AG04449 (cell line): ENCODE measurements at regions of chr1 and their contacts with region 1.

Region 1: DNA sequence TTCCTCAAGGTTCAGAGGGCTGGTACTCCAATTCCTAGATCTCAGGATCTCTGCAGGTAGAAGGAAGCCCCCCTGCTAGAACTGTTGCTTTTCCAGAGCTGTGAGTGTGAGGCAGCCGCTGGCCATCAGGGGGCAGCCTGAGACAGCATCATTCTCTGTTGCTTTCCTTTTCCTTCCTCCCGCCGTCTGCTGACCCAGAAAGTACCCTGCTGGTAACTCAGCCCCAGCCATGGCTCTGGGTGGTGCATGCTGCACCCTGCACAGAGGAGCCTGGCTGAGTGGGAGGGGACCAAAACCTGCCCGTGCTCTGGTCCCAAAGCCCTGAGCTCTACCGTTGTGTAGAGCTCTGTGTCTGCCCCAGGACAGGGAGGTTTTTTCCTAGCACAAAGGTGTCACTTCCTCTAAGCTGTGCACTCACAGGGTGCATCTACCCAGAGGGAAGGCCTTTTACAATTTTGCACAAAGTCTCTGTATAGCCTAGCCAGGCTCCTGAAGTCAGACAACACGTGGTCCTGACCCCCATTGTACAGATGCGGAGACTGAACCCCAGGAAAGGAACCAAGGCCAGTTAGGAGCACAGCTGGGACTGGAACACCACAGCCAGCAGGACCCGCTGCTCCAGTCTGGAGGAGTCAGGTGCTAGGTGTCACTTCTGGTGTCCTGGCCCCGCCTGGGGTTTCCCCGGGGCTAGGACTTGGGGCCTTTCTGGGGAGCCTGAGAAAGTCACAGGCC is 5.6 kb upstream of the FAM131C start:
- DNase-seq: no peak
- H3K4me3 ChIP-seq: no peak overlapping the region
- CTCF ChIP-seq: peak; percentile 96

Region 2: GRCh38 chr1:15902882-15903281 is 176.2 kb before region 1 on chr1:
- CTCF ChIA-PET with region 1: no interaction called
- POLR2A ChIA-PET with region 1: no interaction called
- DNase-seq: no peak
- H3K4me3 ChIP-seq: no peak overlapping the region
- CTCF ChIP-seq: no peak

Region 3: GRCh38 chr1:16091296-16091695 is 12.2 kb after region 1 on chr1:
- CTCF ChIA-PET with region 1: interaction called, 126 read pairs
- POLR2A ChIA-PET with region 1: interaction called, 4 read pairs
- DNase-seq: no peak
- H3K4me3 ChIP-seq: no peak overlapping the region
- CTCF ChIP-seq: no peak

Region 4: GRCh38 chr1:16117369-16117768 is 38.3 kb after region 1 on chr1:
- CTCF ChIA-PET with region 1: interaction called, 80 read pairs
- POLR2A ChIA-PET with region 1: no interaction called
- DNase-seq: no peak
- H3K4me3 ChIP-seq: no peak overlapping the region
- CTCF ChIP-seq: no peak

Region 5: DNA sequence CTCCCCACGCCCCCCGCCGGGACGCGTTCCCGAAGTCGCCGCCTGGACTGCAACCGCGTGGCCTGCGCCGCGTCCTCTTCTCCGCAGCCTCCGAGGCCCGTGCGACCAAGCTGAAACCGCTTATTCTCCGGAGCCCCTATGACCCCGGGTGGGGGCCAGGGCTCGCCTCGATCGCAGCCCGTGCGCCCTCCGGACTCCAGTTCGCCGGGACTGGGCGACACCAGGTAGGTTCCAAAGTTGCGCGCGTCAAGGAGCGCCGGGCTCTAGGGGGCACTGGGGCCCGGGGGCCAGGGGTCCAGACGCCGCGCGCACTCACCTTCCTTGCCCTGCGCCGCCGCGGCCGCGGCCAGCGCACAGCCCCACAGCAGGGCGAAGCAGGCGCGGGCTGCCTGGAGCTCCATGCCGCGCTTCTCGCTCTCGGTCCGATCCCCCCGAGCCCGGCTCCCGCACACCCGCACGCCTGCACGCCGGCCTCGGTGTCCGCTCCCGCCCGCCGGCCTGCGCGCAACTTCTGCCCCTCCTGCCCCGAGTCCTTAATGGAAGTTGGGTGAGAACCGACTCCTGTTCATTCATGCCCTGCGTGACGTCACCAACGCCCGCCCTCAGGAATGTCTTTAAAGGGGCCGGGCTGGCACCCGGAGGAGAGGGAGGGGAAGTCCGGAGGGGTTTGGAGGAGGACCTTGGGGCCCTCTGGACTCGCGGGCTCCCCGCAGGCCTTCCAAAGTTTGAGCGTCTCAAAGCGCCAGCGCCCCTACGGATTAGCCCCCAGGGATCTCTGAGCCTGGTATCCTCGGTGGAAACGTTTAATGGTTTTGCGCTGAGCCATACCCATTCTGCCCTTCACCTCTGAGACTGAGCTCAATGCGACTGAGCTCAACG is 76.7 kb after region 1 on chr1 and contains the start of gene EPHA2:
- CTCF ChIA-PET with region 1: interaction called, 217 read pairs
- POLR2A ChIA-PET with region 1: no interaction called
- DNase-seq: no peak
- H3K4me3 ChIP-seq: peak within 1 kb of the TSS; percentile 84
- CTCF ChIP-seq: no peak

Region 6: DNA sequence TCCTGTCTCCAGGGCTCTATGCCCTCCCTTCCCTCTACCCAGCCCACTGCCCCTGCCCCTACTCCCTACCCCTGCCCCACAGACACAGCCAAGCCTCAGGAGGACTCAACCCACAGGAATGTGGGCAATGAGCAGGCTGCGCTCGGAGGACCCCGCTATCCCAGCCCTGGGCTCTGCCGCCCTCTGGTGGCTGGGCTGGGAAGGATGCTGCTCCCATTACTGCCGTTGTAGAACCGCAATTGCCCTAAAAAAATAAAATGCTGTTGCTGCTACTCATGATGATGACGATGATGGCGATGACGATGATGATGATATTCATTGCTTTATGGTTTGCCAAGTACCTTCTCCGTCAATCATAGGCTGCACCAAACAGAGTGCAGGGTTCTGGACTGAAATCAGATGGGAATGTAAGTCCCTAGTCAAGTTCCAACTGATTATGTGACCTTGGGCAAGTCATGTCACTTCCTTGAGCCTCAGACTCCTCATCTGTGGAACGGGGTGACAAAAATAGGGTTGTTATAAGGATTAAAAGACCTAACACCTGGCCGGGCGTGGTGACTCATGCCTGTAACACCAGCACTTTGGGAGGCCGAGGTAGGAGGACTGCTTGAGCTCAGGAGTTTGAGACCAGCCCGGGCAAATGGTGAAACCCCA is 108.8 kb after region 1 on chr1:
- CTCF ChIA-PET with region 1: interaction called, 1,006 read pairs
- POLR2A ChIA-PET with region 1: interaction called, 3 read pairs
- DNase-seq: no peak
- H3K4me3 ChIP-seq: no peak overlapping the region
- CTCF ChIP-seq: peak; percentile 97

Region 7: DNA sequence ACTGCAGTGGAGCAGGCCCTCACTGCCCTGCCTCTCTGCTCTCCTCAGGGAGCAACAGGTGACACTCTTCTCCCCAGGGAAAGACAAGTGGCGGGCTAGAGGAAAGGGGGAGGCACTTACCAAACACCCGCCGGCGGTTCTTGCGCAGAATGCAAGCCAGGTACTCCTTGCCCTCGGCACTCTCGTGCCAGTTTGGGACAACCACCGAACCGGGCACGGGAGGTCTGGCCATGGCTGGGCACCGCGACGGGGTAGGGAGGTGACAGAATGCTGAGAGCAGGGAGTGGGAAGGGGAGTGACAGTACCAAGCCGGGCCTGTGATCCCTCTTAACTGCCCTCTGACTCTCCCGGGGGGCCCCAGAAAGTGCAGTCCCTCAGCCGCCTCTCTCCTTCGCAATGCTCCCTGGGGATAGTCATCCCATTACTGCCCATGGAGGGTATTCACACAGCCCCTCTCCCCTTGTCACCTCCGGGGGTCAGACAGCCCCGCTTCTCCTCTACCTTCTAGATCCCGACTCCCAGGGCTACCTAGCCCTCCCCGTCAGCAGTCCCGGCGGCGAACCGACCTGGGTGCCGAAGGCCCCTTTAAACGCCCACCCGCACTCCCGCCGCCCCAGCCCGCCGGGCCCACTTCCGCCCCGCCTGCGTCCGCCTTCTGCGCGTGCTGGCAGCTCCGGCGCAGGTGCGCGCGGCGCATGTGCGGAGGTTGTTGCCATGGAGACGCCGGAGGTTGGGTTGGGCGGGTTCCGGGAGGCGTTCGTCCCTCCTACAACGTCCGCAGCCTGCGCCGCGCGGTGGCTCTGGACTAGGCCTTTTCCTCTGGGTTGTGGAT is 157.6 kb after region 1 on chr1 and contains the start of gene CPLANE2:
- CTCF ChIA-PET with region 1: interaction called, 319 read pairs
- POLR2A ChIA-PET with region 1: no interaction called
- DNase-seq: no peak
- H3K4me3 ChIP-seq: peak within 1 kb of the TSS; percentile 75
- CTCF ChIP-seq: no peak

Region 8: GRCh38 chr1:17075470-17076255 is 996.6 kb after region 1 on chr1:
- CTCF ChIA-PET with region 1: no interaction called
- POLR2A ChIA-PET with region 1: no interaction called
- DNase-seq: no peak
- H3K4me3 ChIP-seq: no peak overlapping the region
- CTCF ChIP-seq: peak; percentile 29